ENCODE measurements at regions of chr7 and their contacts with region 1.

Region 1: GRCh38 chr7:22452142-22452959 is 47.6 kb downstream of the STEAP1B start:
- DNase-seq: peak; percentile 52
- H3K4me3 Mint-ChIP-seq: peak overlapping the region; percentile 56
- H3K27ac Mint-ChIP-seq: no peak overlapping the region
- H3K4me1 Mint-ChIP-seq: peaks cover 9% of the 10 kb centered on the region
- H3K27me3 Mint-ChIP-seq: no peaks in the 10 kb centered on the region
- CTCF ChIP-seq: peak; percentile 59

Region 2: DNA sequence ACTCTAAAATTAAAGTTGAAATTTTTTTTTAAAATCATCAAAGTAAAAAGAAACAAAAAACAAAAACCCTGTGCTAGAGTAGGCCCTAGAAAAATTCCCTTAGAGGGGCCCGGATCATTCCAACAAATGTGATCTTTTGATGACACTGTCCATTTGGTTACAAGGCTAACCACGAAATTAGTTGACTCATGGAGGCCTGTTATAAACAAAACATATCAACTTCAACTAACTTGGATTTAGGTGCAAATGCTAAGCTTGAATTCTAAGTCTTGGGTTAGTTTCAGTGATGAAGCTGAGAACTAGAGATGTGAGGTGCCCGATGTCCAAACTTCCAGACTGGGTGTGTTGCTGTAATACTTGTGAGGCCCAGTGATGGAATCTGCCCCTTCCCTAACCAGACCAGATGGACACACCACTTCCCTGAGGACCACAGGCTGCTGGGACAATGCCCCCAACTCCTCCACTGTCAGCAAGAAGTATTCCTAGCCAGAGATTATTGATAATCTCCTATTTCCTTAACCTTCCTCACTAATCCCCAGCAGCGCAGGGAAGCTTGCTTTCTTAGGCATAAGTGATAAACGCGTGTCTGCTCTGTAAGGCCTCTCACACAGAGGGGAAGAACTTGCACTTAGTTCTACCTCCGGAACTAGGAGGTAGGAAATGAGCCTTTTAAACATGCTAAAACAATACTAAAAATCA is 204.1 kb before region 1 on chr7:
- CTCF ChIA-PET with region 1: no interaction called
- POLR2A ChIA-PET with region 1: no interaction called
- intact Hi-C with region 1: no loop called
- DNase-seq: no peak
- H3K4me3 Mint-ChIP-seq: no peak overlapping the region
- H3K27ac Mint-ChIP-seq: no peak overlapping the region
- H3K4me1 Mint-ChIP-seq: no peaks in the 10 kb centered on the region
- H3K27me3 Mint-ChIP-seq: no peaks in the 10 kb centered on the region
- CTCF ChIP-seq: no peak

Region 3: DNA sequence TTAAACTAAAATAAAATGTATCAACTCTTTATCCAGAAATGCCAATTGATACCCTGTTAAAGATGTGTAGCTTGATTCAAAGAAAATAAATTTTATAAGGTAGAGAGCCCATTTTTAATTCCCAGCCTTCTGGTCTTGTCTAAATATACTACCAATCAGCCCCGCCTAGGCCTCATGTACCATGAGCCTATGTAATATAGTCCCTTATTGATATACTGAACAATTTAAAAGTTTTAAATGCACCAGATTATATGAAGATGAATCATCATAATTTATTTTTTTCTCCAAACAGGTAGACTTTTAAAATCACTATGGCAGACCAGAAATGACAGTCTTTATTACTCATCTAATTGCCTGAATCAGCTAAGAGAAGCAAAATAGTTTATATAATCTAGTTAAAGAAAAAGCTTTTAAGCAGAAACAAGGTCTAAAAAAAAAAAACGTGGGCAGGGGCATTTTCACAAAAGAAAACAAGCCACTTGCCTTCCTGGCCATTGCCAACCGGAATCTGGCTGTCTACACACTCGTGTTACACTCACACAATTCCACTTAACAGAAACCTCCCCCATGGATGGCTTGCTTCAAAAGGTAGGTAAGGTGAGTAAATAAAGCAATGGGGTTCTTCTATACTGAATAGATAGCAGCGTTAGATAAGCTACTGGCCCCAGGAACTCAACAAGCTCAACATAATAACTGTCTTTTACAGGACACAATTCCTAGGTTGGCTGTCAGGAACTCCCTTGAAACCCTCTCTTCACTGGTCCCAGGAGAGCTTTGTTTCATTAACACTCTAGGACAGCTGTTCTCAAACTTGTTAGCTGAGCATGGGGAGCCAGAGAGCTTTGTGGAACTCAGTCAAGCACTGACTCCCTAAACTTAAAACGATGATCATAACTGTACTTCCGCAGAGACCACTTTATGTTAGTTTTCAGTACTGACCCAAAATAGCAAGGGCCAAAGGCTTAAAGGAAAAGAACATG is 132.6 kb before region 1 on chr7:
- CTCF ChIA-PET with region 1: interaction called, 10 read pairs
- POLR2A ChIA-PET with region 1: no interaction called
- intact Hi-C with region 1: no loop called
- DNase-seq: no peak
- H3K4me3 Mint-ChIP-seq: no peak overlapping the region
- H3K27ac Mint-ChIP-seq: no peak overlapping the region
- H3K4me1 Mint-ChIP-seq: no peaks in the 10 kb centered on the region
- H3K27me3 Mint-ChIP-seq: no peaks in the 10 kb centered on the region
- CTCF ChIP-seq: no peak

Region 4: DNA sequence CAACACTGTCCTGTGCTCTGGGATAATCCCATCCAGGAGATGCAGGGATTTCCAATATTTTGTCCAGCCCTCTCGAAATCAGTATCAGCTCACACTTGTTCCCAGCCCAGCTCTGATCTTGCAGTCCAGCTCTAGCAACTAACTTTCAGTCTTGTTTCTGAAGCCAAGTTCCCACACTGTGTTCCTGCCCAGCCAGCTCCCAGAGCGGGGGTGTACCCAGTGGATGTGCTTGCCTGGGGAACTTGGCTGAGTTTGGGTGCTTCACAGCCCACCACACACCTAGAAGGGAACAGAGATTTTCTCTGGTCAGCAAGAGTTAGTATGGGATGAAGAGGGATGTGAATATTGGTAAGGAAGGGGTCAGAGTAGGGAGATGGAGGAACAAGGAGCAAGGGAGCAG is 37.9 kb before region 1 on chr7:
- CTCF ChIA-PET with region 1: no interaction called
- POLR2A ChIA-PET with region 1: no interaction called
- intact Hi-C with region 1: no loop called
- DNase-seq: no peak
- H3K4me3 Mint-ChIP-seq: no peak overlapping the region
- H3K27ac Mint-ChIP-seq: no peak overlapping the region
- H3K4me1 Mint-ChIP-seq: no peaks in the 10 kb centered on the region
- H3K27me3 Mint-ChIP-seq: no peaks in the 10 kb centered on the region
- CTCF ChIP-seq: no peak

Measured in MCF 10A (cell line).